Endothelial cell of umbilical vein (primary cell): ENCODE measurements at regions of chr9 and their contacts with region 1.

Region 1: GRCh38 chr9:76458903-76459690 is at the start of gene GCNT1:
- DNase-seq: peak; percentile 93
- H3K4me3 ChIP-seq: peak within 1 kb of the TSS; percentile 71 to 87 (median 75)
- H3K27ac ChIP-seq: peak within 1 kb of the TSS; percentile 64
- H3K4me1 ChIP-seq: peaks cover 23% of the 10 kb centered on the region
- H3K27me3 ChIP-seq: no peaks in the 10 kb centered on the region
- CTCF ChIP-seq: peak; percentile 21 to 55
- POLR2A ChIP-seq: peak; percentile 73
- total RNA-seq, gene GCNT1: 11.0 and 18.1 TPM in 2 replicates

Region 2: DNA sequence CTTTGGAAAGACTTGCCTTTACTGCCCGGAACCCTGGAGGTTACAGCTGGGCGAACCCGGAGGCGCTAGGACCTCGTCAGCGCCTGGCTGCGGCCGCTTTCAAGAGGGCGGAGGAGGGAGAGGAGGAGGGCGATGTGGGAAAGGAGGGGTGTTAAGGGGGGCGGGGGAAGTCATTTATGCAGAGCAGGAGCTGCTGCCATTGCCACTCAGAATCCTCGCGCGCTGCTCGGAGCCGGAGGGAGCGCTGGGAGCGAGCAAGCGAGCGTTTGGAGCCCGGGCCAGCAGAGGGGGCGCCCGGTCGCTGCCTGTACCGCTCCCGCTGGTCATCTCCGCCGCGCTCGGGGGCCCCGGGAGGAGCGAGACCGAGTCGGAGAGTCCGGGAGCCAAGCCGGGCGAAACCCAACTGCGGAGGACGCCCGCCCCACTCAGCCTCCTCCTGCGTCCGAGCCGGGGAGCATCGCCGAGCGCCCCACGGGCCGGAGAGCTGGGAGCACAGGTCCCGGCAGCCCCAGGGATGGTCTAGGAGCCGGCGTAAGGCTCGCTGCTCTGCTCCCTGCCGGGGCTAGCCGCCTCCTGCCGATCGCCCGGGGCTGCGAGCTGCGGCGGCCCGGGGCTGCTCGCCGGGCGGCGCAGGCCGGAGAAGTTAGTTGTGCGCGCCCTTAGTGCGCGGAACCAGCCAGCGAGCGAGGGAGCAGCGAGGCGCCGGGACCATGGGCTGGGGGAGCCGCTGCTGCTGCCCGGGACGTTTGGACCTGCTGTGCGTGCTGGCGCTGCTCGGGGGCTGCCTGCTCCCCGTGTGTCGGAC is 568.4 kb before region 1 on chr9 and contains the start of gene PCSK5:
- CTCF ChIA-PET with region 1: no interaction called
- POLR2A ChIA-PET with region 1: no interaction called
- dilution Hi-C with region 1: no loop called
- intact Hi-C with region 1: loop called (anchors 5 kb)
- DNase-seq: peak; percentile 94
- H3K4me3 ChIP-seq: peak within 1 kb of the TSS; percentile 66 to 90 (median 87)
- H3K27ac ChIP-seq: peak within 1 kb of the TSS; percentile 39
- H3K4me1 ChIP-seq: peaks cover 18% of the 10 kb centered on the region
- H3K27me3 ChIP-seq: peaks cover 0 to 6% of the 10 kb centered on the region in 2 experiments
- CTCF ChIP-seq: peak; percentile 7 to 41
- POLR2A ChIP-seq: peak; percentile 71
- total RNA-seq, gene PCSK5: 4.8 and 5.1 TPM in 2 replicates

Region 3: DNA sequence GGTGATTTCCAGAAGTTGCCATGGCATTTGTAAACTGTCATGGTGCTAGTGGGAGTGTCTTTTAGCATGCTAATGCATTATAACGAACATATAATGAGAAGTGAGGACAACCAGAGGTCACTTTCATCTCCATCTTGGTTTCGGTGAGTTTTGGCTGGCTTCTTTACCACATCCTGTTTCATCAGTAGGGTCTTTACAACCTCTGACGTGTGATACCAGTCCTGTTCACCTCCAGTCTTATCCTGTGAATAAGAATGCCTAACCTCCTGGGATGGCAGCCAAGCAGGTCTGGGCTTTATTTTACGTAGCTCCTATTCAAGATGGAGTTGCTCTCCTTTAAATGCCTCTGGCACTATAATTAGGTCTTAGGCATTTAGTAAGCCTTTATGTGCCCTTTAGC is 44.4 kb before region 1 on chr9:
- CTCF ChIA-PET with region 1: interaction called, 4 read pairs
- POLR2A ChIA-PET with region 1: no interaction called
- dilution Hi-C with region 1: no loop called
- intact Hi-C with region 1: loop called (anchors 1 kb)
- DNase-seq: peak; percentile 88
- H3K4me3 ChIP-seq: no peak overlapping the region
- H3K27ac ChIP-seq: peak overlapping the region; percentile 76
- H3K4me1 ChIP-seq: peaks cover 30% of the 10 kb centered on the region
- H3K27me3 ChIP-seq: no peaks in the 10 kb centered on the region
- CTCF ChIP-seq: no peak
- POLR2A ChIP-seq: no peak

Region 4: GRCh38 chr9:76433836-76434235 is 25.3 kb before region 1 on chr9:
- CTCF ChIA-PET with region 1: no interaction called
- POLR2A ChIA-PET with region 1: no interaction called
- dilution Hi-C with region 1: no loop called
- intact Hi-C with region 1: no loop called
- DNase-seq: no peak
- H3K4me3 ChIP-seq: no peak overlapping the region
- H3K27ac ChIP-seq: no peak overlapping the region
- H3K4me1 ChIP-seq: no peaks in the 10 kb centered on the region
- H3K27me3 ChIP-seq: no peaks in the 10 kb centered on the region
- CTCF ChIP-seq: no peak
- POLR2A ChIP-seq: no peak

Region 5: DNA sequence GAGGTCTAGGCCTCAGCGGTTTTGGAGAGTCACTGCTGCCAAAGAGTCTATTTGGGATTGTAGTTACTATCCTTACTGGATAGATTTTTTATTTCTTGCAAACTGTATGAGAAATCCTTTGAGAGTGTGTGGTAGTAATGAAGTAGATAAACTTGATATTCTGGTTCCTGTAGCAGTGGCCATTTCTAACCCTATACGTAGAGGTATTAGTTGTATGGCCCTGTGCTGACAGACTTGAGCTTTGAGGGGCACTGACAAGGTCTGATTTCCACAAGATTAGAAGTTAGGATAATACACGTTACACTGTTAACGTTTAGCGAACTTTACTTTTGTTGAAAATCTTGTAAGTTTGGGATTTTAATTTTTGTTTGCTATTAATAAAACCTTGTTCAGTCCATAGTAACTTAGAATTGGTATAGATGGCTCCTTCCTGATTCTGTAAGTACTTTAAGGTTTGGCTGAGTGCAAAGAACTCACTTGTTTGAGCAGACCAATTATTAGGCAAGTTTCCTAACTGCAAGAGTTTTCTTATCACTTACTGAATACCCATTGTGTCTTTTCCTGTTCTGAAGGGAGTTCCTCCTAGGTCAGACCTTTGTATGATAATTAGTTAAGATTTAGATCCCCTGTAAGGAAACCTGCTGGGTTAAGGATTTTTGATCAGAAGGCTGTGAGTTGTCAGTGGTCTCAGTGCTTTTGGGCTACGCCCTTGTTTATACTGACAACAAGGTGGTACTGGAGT is 31.3 kb after region 1 on chr9:
- CTCF ChIA-PET with region 1: interaction called, 4 read pairs
- POLR2A ChIA-PET with region 1: no interaction called
- dilution Hi-C with region 1: no loop called
- intact Hi-C with region 1: loop called (anchors 5 kb)
- DNase-seq: peak; percentile 60
- H3K4me3 ChIP-seq: no peak overlapping the region
- H3K27ac ChIP-seq: no peak overlapping the region
- H3K4me1 ChIP-seq: peaks cover 10% of the 10 kb centered on the region
- H3K27me3 ChIP-seq: no peaks in the 10 kb centered on the region
- CTCF ChIP-seq: no peak
- POLR2A ChIP-seq: no peak

Region 6: GRCh38 chr9:76658535-76659231 is 199.6 kb after region 1 on chr9:
- CTCF ChIA-PET with region 1: interaction called, 28 read pairs
- POLR2A ChIA-PET with region 1: no interaction called
- dilution Hi-C with region 1: no loop called
- intact Hi-C with region 1: loop called (anchors 1 kb)
- DNase-seq: peak; percentile 79
- H3K4me3 ChIP-seq: no peak overlapping the region
- H3K27ac ChIP-seq: no peak overlapping the region
- H3K4me1 ChIP-seq: peaks cover 51% of the 10 kb centered on the region
- H3K27me3 ChIP-seq: no peaks in the 10 kb centered on the region
- CTCF ChIP-seq: peak; percentile 37 to 54
- POLR2A ChIP-seq: no peak